ENCODE measurements at regions of chr17 and their contacts with region 1.

Region 1: DNA sequence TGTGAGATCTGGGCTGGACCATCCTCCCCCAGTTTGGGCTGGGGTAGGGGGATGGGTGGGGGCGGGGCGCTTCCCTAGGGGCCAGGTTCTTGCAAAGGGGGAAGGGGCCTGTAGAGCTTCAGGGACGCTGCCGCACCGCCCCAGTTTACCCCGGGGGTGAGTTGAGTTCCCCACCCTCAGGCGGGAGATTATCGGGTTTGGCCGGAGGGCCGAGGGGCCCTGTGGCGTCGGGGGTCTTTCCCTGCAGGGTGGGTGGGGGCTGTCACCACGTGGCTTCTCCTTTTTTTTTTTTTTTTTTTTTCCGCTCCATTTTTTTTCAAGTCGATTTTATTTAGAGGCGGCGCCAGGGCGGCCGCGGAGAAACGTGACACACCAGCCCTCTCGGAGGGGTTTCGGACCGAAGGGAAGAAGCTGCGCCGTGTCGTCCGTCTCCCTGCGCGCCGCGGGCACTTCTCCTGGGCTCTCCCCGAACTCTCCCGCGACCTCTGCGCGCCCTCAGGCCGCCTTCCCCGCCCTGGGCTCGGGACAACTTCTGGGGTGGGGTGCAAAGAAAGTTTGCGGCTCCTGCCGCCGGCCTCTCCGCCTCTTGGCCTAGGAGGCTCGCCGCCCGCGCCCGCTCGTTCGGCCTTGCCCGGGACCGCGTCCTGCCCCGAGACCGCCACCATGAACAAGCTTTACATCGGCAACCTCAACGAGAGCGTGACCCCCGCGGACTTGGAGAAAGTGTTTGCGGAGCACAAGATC is at the start of gene IGF2BP1:
- H3K4me3 ChIP-seq: peak within 1 kb of the TSS; percentile 64
- H3K27ac ChIP-seq: peak within 1 kb of the TSS; percentile 100
- H3K4me1 ChIP-seq: peaks cover 27% of the 10 kb centered on the region
- CTCF ChIP-seq: no peak

Region 2: GRCh38 chr17:48908047-48908843 is 89.0 kb before region 1 on chr17 and contains the start of gene UBE2Z:
- CTCF ChIA-PET with region 1: interaction called, 3 read pairs
- POLR2A ChIA-PET with region 1: interaction called, 33 read pairs
- H3K4me3 ChIP-seq: peak within 1 kb of the TSS; percentile 93
- H3K27ac ChIP-seq: peak within 1 kb of the TSS; percentile 95
- H3K4me1 ChIP-seq: peaks cover 16% of the 10 kb centered on the region
- CTCF ChIP-seq: peak; percentile 83

Region 3: DNA sequence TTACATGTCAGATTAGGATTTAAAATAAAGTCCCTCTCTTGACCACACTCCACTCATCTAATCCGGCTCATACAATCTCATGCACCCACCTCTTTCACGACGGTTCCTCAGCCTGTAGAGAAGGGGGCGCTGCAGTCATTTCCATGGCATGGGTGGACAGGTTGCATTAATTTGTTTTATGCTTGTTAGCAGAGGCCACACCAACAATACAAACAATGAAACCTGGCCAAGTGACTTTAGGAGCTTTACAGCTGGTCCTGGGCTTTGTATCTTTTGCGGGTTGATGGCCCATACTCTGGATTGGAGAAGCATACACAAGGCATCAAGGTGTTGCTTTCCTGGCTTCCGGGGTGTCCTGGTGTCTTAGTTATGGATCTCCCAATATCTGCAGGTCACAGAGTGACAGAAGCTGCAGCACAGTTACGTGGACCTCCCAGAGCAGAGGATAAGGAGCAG is 42.9 kb before region 1 on chr17:
- CTCF ChIA-PET with region 1: interaction called, 16 read pairs
- POLR2A ChIA-PET with region 1: interaction called, 4 read pairs
- H3K4me3 ChIP-seq: no peak overlapping the region
- H3K27ac ChIP-seq: no peak overlapping the region
- H3K4me1 ChIP-seq: no peaks in the 10 kb centered on the region; the same call in 1 of the 2 replicates
- CTCF ChIP-seq: peak; percentile 73

Region 4: DNA sequence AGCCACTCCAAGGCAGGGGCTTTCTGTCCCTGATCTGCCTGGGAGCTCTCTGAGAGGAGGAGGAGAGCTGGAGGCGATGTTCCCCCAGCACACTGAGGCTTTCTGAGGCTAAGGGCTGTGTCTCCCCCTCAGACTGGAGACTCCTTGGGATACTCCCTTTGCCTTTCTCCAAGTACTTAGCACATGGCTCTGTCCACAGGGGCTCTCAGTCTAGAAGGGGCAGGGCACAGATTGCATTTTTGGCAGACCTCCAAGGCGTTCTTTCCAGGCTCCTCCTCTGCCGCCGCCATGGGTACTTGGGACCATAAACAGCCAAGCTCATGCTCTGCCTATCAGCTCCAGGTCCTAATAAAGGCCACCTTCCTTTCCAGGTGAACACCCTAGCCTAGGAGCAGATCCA is 27.0 kb before region 1 on chr17:
- CTCF ChIA-PET with region 1: interaction called, 3 read pairs
- POLR2A ChIA-PET with region 1: interaction called, 42 read pairs
- H3K4me3 ChIP-seq: no peak overlapping the region
- H3K27ac ChIP-seq: peak overlapping the region; percentile 13; the same call in 1 of the 2 replicates
- H3K4me1 ChIP-seq: peaks cover 15% of the 10 kb centered on the region
- CTCF ChIP-seq: no peak

Region 5: DNA sequence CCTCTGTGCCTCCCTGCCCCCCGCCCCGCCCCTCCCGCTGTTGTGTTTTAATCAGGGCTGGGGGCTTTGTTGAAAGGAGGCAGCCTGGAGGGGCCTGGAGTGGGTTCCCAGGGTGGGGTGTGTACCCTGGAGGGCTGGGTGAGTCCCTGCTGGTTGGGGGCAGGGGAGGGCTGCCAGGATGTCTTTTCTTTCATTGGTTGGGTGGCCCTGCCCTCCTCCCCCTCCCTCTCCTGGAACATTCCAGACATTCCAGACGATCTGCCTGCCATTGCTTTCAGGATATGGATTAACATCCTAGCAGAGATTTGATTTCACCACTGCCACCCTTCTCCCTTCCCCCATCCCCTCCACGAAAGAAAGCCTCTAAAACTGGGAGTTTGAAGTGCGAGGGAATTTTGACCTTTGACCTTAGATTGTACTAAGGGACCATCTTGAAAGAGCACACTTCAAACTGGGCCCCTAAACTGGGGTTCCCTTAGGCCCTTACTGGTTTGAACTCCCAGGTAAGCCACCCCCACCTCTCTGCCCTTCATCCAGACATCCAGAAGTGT is 25.2 kb after region 1 on chr17:
- CTCF ChIA-PET with region 1: interaction called, 129 read pairs
- POLR2A ChIA-PET with region 1: interaction called, 11 read pairs
- H3K4me3 ChIP-seq: no peak overlapping the region
- H3K27ac ChIP-seq: 0 out of 2 replicates have a peak overlapping the region, but pooled peaks have one; percentile 24
- H3K4me1 ChIP-seq: peaks cover 28% of the 10 kb centered on the region
- CTCF ChIP-seq: no peak

Region 6: DNA sequence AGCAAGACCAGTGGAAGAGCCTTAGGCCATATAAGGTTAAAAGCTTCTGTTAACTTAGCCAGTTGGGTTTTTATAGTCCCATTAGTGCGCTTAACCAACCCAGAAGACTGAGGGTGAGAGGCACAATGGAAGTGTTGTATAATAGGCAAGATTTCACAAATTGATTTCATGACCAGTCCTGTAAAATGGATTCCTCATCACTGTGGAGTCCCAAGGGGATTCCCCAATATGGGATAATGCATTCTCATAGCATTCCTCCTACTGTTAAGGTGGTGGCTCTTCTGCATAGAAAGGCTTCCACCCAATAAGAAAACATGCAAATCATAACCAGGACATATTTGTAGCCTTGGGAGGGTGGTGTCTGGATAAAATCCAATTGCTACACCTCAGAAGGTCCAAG is 113.3 kb after region 1 on chr17:
- CTCF ChIA-PET with region 1: no interaction called
- POLR2A ChIA-PET with region 1: no interaction called
- H3K4me3 ChIP-seq: no peak overlapping the region
- H3K27ac ChIP-seq: no peak overlapping the region
- H3K4me1 ChIP-seq: peaks cover 11% of the 10 kb centered on the region
- CTCF ChIP-seq: no peak

Measured in HEK293 (cell line).